ENCODE measurements at regions of chr6 and their contacts with region 1.

Region 1: DNA sequence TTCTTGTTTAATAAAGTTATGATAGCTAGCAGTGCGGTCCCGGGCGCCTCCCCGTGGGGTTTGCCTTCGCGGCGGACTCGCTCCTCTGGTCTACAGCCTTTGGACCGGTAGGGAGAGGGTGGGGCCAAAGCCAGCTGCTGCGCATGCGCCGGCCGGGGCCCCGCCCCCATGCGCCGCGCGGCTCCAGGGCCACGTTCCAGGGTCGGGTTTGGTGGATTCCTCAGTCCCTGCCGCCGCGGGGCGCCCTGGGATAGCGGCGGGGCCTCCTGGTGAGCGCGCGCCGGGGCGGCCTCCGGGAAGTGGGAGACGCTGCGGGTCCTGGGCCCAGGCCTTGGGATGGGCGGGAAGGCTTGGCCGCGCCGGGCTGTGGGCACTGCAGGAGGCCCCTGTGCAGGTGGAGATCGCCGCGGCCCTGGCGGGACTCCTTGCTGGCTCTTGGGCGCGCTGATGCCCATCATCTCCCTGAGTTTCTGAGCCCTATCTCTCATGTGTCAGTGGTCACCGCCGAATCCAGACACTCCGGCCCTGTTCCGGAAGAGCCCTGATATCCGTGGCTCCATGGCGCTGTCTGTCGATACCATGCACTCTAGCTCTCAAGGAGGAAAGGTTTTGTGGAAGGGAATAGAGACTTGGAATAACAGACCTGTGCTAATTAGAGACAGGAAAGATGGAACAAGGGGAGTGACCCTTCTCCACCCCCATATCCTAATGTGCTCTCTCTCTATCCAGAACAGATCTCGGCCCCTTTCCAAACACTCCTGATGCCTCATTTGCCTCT is at the start of gene VARS2:
- DNase-seq: peak; percentile 88 to 99 (median 92)

Region 2: DNA sequence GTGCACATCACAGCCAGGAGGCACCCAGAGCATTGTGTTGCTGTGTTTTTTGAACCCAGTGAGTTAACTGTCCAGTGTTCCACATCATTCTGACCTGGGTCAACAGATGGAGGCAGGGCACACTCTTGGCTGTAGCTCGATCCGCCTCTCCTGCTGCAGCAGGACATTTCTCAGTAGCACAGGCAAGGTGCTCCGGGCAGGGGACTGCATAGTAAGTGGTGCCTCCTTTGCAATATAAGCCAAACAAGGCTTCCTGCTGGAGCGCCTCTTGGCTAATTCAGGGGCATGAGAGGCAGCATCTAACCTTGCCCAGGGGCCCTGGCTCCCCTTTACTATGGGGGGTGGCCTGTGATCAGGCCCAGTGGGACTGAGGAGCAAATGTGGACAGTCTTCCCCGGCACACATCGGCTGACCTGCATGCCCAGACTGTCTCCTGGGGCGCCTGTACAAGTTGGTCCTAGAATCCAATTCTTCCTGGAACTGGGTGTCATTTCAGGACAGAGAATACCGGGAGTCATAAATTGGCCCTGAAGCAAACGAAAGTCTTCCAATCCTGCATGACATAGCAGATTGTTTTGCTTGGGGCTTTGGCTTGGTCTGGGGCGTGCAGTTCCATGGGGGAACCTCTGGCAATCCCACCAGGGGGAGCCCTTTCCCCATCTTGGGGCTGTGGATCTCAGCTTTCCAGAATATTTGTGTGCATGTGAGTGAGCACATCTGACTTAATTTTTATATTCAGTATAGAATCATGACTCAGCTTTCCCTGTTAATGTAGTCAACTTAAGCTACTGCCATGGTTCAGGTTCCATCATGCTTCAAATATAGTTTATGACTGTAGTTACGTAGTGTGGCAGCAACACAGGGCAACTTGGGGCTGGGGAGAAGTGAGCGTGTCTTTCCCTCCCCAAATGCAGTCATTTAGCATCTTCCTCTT is 86.0 kb before region 1 on chr6:
- intact Hi-C with region 1: loop called (anchors 2 kb)
- DNase-seq: peak; percentile 75 to 97 (median 89)

Region 3: DNA sequence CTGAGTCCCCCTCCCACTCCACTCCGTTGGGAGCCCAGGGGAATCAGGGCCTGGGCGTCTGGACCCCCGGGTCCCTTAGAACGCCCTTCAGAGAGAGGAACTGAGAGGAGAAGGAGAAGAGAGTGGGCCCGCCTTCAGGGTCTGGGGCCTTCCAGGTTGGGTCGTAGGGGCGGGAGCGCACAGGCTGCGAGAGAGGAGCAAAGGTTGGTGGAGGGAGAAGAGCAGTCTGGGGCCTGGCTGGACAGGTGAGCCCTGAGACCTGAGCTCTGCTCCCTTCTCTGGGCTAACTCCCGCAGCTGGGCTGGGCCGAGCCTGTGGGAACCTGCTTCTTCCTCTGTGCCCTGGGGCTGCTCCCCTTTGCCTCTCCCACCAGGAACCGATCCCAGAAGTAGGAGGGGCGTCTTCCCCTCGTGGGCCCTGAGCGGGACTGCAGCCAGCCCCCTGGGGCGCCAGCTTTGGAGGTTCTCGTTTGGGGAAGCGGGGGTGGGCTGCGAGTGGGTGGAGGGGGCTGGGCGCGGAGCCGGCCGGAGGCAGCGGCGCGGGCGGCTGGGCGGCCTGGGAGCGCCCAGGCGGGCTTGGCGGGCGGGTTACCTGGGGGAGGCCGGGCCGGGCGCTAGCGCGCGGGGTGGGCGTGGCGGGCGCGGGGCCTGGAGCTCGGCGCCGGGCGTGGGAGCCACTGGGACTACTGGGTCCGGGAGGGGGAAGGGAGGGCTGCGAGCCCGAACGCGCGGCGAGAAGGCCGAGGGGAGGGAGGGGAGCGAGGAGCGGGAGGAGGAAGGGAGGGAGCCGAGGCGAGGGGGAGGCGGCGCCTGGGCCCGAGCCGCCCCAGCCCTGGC is 30.4 kb before region 1 on chr6 and contains the start of gene DDR1:
- intact Hi-C with region 1: loop called (anchors 2 kb)
- DNase-seq: peak in 8 of 10 donors; percentile 70 to 97 (median 82)

Region 4: DNA sequence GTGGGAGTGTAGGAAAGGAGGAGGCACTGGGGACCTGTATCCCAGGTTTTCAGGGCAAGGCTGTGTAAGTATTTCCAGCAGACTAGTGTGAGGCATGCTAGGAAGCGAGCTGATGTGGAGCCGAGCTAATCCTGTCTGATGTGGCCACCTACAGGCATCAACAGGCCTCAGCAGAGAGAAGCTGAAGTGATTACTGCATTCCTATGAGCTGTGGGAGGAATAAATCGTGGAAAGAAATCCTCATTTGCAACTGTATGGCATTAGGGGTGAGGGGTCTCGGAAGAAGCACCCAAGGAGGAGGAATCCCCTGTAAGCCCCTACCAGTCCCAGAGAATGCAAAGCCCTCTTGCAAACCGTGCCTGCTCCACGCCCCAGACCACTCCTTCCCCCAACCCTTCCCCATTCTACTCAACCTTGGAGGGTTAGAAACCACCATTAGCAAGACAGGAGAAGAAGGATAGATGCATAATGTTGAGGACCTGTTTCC is 156.5 kb after region 1 on chr6:
- intact Hi-C with region 1: loop called (anchors 1 kb)
- DNase-seq: peak in 9 of 10 donors; percentile 56 to 96 (median 73)